Activated T-helper 2 cell treated with anti-CD3 and anti-CD28 coated beads, Interferon-gamma antibody, Interleukin-2, Interleukin-4, amounts not matched to agents 10 μg/mL and 5 μg/mL and 100 μg/mL, durations not matched to agents 14 hours and 24 hours and 36 hours (primary cell): ENCODE measurements at regions of chr7 and their contacts with region 1.

Region 1: DNA sequence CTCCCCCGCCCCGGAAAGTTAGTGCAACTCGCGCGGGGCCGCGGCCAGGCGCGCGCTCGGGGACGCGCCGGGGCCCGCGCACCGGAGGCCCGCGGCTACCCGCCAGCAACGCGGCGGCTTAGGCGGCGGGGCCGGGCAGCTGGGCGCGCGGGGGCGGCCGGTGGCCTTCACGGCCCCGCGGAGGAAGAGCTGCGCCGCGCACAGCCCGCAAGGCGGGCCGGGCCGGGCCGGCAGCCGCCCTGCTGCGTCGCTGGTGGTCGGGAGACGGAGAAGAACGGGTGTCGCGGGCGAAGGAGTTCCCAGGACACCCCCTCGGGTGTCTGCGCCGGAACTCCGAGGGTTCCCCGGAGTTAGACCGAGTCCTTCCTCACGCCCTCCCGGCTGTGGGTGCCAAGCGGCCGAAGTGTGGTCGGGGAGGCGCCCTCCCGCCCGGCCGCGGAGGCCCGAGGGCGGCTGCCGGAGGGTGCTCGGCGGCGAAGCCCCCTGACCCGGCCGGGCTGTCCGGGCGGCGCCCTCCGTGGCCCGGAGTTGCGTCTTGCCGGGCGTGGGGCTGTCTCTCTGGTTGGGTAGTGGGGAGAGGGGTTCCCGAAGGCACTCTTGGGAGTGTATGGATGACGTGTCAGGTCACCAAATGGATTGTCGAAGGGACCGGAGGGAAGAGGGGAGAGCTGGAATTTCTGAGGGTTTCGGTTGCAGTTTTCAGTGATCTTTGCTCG is 584 bp downstream of the ST7 start:
- DNase-seq: no peak
- H3K4me3 Mint-ChIP-seq: peak overlapping the region; percentile 94
- H3K27ac Mint-ChIP-seq: peak overlapping the region; percentile 89
- H3K4me1 Mint-ChIP-seq: peaks cover 31% of the 10 kb centered on the region
- H3K27me3 Mint-ChIP-seq: peaks cover 8% of the 10 kb centered on the region

Region 2: GRCh38 chr7:116938678-116939077 is 15.2 kb before region 1 on chr7:
- intact Hi-C with region 1: loop called (anchors 1 kb)
- DNase-seq: no peak
- H3K4me3 Mint-ChIP-seq: no peak overlapping the region
- H3K27ac Mint-ChIP-seq: no peak overlapping the region
- H3K4me1 Mint-ChIP-seq: peaks cover 3% of the 10 kb centered on the region
- H3K27me3 Mint-ChIP-seq: peaks cover 27% of the 10 kb centered on the region

Region 3: GRCh38 chr7:117019786-117020590 is 66.1 kb after region 1 on chr7:
- intact Hi-C with region 1: no loop called
- DNase-seq: no peak
- H3K4me3 Mint-ChIP-seq: no peak overlapping the region
- H3K27ac Mint-ChIP-seq: no peak overlapping the region
- H3K4me1 Mint-ChIP-seq: peaks cover 28% of the 10 kb centered on the region
- H3K27me3 Mint-ChIP-seq: peaks cover 9% of the 10 kb centered on the region